ENCODE measurements at regions of chr5 and their contacts with region 1.

Region 1: GRCh38 chr5:57505272-57506200 is 22.9 kb upstream of the ACTBL2 start:
- DNase-seq: peak; percentile 42
- ATAC-seq: no peak
- H3K4me3 ChIP-seq: no peak overlapping the region
- H3K27ac ChIP-seq: no peak overlapping the region
- H3K4me1 ChIP-seq: peaks cover 8% of the 10 kb centered on the region
- H3K27me3 ChIP-seq: no peaks in the 10 kb centered on the region
- CTCF ChIP-seq: no peak
- POLR2A ChIP-seq: no peak
- RAD21 ChIP-seq: no peak

Region 2: GRCh38 chr5:57561231-57561842 is 55.8 kb after region 1 on chr5:
- CTCF ChIA-PET with region 1: no interaction called
- POLR2A ChIA-PET with region 1: no interaction called
- dilution Hi-C with region 1: no loop called
- in situ Hi-C with region 1: no loop called
- intact Hi-C with region 1: loop called (anchors 5 kb)
- DNase-seq: no peak
- ATAC-seq: no peak
- H3K4me3 ChIP-seq: no peak overlapping the region
- H3K27ac ChIP-seq: no peak overlapping the region
- H3K4me1 ChIP-seq: peaks cover 3% of the 10 kb centered on the region; the same call in 1 of the 2 replicates
- H3K27me3 ChIP-seq: no peaks in the 10 kb centered on the region
- CTCF ChIP-seq: no peak
- POLR2A ChIP-seq: no peak
- RAD21 ChIP-seq: no peak

Region 3: DNA sequence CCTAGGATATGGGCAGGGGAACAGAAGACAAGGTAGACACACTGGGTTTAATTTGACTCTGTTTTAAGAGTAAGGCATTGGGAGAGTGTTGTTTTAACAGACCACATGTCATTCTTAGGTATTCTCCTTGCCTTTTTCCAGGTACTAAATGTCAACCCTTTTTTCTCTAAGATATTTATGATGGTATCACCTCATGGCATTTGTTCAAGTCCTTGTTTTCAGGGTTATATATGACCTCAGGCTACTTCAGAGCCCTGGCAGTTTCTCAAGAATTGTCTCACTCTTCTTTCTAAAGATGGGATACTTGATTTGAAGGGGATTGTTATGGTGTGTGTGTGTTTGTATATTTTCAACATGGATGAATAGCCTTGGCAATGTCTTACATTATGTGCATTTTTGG is 108.2 kb after region 1 on chr5:
- CTCF ChIA-PET with region 1: no interaction called
- POLR2A ChIA-PET with region 1: no interaction called
- dilution Hi-C with region 1: no loop called
- in situ Hi-C with region 1: no loop called
- intact Hi-C with region 1: loop called (anchors 5 kb)
- DNase-seq: peak; percentile 36
- ATAC-seq: no peak
- H3K4me3 ChIP-seq: no peak overlapping the region
- H3K27ac ChIP-seq: no peak overlapping the region
- H3K4me1 ChIP-seq: no peaks in the 10 kb centered on the region
- H3K27me3 ChIP-seq: no peaks in the 10 kb centered on the region
- CTCF ChIP-seq: no peak
- POLR2A ChIP-seq: no peak
- RAD21 ChIP-seq: no peak

Region 4: DNA sequence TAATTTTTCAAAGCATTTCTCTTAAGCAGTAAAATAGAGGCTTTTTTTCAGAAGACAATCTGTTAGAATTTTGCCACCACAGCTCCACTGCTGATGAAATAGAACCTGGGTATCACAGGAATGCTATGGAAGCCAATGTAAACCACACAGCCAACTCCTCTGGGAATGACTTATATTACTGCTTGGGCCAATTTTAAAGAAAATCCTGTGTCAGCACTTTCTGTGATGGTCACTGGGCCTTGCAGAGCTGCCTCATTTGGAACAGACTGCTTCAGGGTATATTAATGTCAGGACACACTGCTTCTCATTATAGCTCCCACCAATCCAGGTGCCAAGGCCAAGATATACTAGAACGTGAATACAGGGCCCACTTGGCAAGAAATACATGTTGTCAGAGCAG is 121.2 kb after region 1 on chr5:
- CTCF ChIA-PET with region 1: no interaction called
- POLR2A ChIA-PET with region 1: no interaction called
- dilution Hi-C with region 1: no loop called
- in situ Hi-C with region 1: no loop called
- intact Hi-C with region 1: no loop called
- DNase-seq: no peak
- ATAC-seq: no peak
- H3K4me3 ChIP-seq: no peak overlapping the region
- H3K27ac ChIP-seq: no peak overlapping the region
- H3K4me1 ChIP-seq: no peaks in the 10 kb centered on the region
- H3K27me3 ChIP-seq: no peaks in the 10 kb centered on the region
- CTCF ChIP-seq: no peak
- POLR2A ChIP-seq: no peak
- RAD21 ChIP-seq: no peak

Region 5: DNA sequence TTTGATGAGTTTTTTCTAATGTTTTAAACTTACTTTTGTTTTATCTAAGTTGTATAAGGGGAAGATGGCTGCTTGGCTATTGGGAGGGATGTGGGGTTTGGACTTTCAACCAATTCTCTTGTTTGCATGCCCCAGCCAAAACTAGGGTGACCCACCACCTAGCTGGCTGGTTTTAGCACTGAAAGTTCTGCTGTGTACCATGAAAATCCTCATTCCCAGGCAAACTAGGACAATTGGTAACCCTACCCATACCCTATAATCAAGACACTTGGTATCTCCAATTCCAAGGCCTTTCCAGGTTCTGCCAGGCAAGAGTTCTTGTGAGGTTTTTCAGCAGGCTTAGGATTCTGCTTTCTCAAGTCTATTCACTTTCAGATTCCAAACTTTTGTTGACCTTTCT is 1090.4 kb after region 1 on chr5:
- CTCF ChIA-PET with region 1: no interaction called
- POLR2A ChIA-PET with region 1: no interaction called
- dilution Hi-C with region 1: no loop called
- in situ Hi-C with region 1: no loop called
- intact Hi-C with region 1: no loop called
- DNase-seq: no peak
- ATAC-seq: no peak
- H3K4me3 ChIP-seq: no peak overlapping the region
- H3K27ac ChIP-seq: no peak overlapping the region
- H3K4me1 ChIP-seq: no peaks in the 10 kb centered on the region
- H3K27me3 ChIP-seq: no peaks in the 10 kb centered on the region
- CTCF ChIP-seq: no peak
- POLR2A ChIP-seq: no peak
- RAD21 ChIP-seq: no peak

Measured in IMR-90 (cell line).